Mammary epithelial cell (primary cell): ENCODE measurements at regions of chr1 and their contacts with region 1.

Region 1: DNA sequence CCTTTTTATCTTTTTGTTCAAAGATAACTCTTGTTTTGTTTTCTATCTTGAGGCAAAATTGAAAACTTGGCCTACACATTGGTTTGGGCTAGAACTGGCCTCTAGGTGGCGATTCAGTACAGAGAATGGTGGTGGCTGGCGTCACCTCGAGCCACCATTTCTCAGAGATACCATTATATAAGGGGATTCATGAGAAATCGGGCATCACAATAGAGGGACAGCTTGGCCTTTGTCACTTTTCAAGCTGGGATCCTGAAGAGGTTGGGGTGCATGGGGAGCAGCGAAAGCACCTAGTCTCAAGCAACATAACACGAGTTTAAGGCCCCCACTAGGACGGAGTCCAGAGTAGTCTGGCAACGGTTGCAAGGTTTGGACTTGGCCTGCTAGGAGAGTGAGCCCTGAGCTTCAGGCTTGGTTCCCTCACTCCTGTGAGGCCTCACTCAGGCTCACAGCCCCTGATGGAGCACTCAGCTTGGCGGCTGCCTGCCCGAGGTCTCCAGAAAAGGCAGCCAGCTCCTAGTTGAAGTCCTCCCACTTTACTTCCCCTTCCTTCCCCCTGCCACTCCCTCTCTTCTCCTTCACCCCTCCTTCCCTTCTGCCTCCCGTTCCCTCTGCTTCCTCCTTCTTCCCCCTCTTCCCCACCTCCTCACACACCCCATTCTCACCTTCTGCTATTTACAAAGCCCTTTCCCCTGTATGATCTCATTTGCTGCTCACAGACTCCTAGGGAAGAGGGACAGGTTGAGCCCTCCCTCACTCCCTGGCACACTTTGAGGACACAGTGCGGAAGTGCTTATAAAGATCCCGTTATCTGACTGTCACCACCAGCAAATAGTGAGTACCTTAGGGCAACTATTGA is 67.8 kb downstream of the LRIG2 start:
- DNase-seq: peak; percentile 32
- H3K4me3 ChIP-seq: no peak overlapping the region
- H3K27ac ChIP-seq: no peak overlapping the region
- H3K4me1 ChIP-seq: peaks cover 22% of the 10 kb centered on the region
- H3K27me3 ChIP-seq: no peaks in the 10 kb centered on the region
- CTCF ChIP-seq: peak; percentile 87 to 93

Region 2: GRCh38 chr1:113389953-113390834 is 249.4 kb after region 1 on chr1 and contains the start of gene MAGI3:
- CTCF ChIA-PET with region 1: interaction called, 4 read pairs
- dilution Hi-C with region 1: no loop called
- in situ Hi-C with region 1: no loop called
- intact Hi-C with region 1: loop called (anchors 1 kb)
- DNase-seq: peak; percentile 99
- H3K4me3 ChIP-seq: peak within 1 kb of the TSS; percentile 68 to 97 (median 74)
- H3K27ac ChIP-seq: peak within 1 kb of the TSS; percentile 71
- H3K4me1 ChIP-seq: peaks cover 14% of the 10 kb centered on the region
- H3K27me3 ChIP-seq: no peaks in the 10 kb centered on the region
- CTCF ChIP-seq: no peak
- total RNA-seq, gene MAGI3: 8.5 to 10.3 TPM

Region 3: DNA sequence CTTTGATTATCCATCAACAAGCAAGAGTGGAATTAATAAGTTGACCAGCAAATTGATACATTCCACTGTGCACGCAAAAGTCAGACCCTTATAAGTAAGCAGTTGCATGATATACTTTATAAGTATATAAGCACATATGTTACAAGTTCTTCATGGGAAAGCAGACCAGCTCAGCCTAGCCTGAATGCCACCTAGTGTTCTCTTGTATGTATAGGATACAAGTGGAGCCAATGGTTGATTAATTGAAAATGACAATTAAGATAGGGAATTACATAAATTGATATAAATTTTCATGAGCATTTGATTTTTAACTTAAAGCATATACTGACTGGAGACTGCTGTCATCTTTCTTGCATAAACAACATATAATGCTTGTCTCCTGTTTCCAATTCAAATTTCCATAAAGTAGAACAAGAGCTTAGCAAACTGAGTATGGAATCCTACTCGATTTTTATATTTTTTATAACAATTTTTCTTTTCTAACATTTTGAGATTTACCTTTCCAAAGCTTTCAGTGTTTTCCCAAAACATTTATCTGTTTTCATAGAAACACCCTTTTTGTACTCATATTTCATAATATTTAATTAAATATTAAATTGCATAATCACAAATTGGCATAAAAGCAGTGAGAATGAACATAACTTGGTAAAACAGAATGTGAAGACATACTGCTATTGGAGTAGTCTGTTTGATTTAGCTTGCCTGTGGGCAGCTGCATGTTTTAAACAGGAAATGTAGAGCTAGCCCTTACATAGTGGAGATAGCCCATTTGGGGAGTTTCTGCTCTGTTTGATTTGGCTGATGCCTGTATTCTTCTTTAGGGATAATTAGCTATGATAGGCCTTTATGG is 312.3 kb after region 1 on chr1:
- CTCF ChIA-PET with region 1: no interaction called
- dilution Hi-C with region 1: no loop called
- in situ Hi-C with region 1: loop called in 1 of 2 experiments (anchors 25 kb)
- intact Hi-C with region 1: loop called (anchors 1 kb)
- DNase-seq: peak; percentile 22
- H3K4me3 ChIP-seq: no peak overlapping the region
- H3K27ac ChIP-seq: no peak overlapping the region
- H3K4me1 ChIP-seq: peaks cover 17% of the 10 kb centered on the region
- H3K27me3 ChIP-seq: no peaks in the 10 kb centered on the region
- CTCF ChIP-seq: peak; percentile 58 to 74

Region 4: GRCh38 chr1:113557177-113557576 is 416.4 kb after region 1 on chr1:
- CTCF ChIA-PET with region 1: no interaction called
- dilution Hi-C with region 1: no loop called
- in situ Hi-C with region 1: no loop called
- intact Hi-C with region 1: loop called (anchors 5 kb)
- DNase-seq: peak; percentile 40
- H3K4me3 ChIP-seq: no peak overlapping the region
- H3K27ac ChIP-seq: no peak overlapping the region
- H3K4me1 ChIP-seq: no peaks in the 10 kb centered on the region
- H3K27me3 ChIP-seq: no peaks in the 10 kb centered on the region
- CTCF ChIP-seq: no peak

Region 5: GRCh38 chr1:113684153-113684541 is 543.3 kb after region 1 on chr1:
- CTCF ChIA-PET with region 1: interaction called, 7 read pairs
- dilution Hi-C with region 1: no loop called
- in situ Hi-C with region 1: loop called (anchors 10 kb)
- intact Hi-C with region 1: no loop called
- DNase-seq: no peak
- H3K4me3 ChIP-seq: no peak overlapping the region
- H3K27ac ChIP-seq: no peak overlapping the region
- H3K4me1 ChIP-seq: no peaks in the 10 kb centered on the region
- H3K27me3 ChIP-seq: no peaks in the 10 kb centered on the region
- CTCF ChIP-seq: no peak

Region 6: GRCh38 chr1:113759333-113760101 is 618.7 kb after region 1 on chr1 and contains the start of gene PHTF1:
- CTCF ChIA-PET with region 1: interaction called, 6 read pairs
- dilution Hi-C with region 1: no loop called
- in situ Hi-C with region 1: no loop called
- intact Hi-C with region 1: loop called (anchors 5 kb)
- DNase-seq: peak; percentile 72
- H3K4me3 ChIP-seq: peak within 1 kb of the TSS; percentile 78 to 96 (median 90)
- H3K27ac ChIP-seq: peak within 1 kb of the TSS; percentile 83
- H3K4me1 ChIP-seq: peaks cover 8% of the 10 kb centered on the region
- H3K27me3 ChIP-seq: no peaks in the 10 kb centered on the region
- CTCF ChIP-seq: no peak
- total RNA-seq, gene PHTF1: 16.6 to 21.0 TPM